Sigmoid colon (tissue), 7 donors: ENCODE measurements at regions of chr18 and their contacts with region 1.

Region 1: DNA sequence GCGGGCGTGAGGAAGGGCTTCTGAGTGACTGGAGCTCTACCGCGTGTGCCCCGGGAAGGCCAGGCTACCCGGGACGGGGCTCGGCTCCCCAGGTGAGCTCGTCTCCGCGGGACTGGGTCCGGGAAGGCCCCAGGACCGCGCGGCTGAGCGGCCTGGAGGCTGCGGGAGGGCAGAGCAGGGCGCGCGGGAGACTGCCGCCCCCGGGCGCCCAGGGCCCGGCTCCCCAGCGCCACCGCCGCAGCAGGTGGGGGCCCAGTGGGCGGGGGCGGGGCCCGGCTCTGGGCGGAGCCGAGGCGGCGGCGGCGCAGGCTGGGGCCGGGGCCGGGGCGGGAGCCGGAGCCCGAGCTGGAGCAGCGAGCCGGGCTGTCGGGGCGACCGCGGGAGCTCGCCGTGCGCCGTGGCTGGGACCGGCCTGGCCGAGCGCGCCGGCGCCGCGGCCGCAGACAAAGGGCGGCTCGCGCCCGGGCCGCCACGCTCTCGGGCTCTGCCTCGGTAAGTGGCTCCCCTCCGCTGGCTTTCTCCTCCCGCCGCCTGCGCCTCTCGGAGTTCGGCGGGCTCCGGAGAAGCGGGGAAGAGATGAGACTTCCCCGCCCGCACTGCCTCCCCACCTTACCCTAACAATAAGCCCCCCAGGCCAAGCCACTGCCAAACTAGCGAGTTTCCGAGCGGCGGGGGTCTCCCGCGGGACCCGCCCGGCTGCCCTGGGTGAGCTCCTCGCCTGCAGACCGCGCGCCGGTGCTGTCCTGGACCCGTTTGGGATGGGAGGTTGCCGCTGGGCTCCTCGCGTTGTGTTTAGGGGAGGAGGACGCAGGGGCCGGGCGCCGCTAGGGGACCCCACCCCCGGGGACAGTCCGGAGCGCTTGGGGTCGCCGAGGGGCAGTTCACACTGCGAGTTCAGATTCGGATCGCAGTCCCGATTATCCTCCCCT is at the start of gene MAPK4:
- DNase-seq: peak; percentile 71
- H3K4me3 ChIP-seq: peak within 1 kb of the TSS; percentile 62 to 79 (median 67)
- H3K27ac ChIP-seq: peak within 1 kb of the TSS; percentile 75 to 86 (median 82)
- H3K4me1 ChIP-seq: peaks cover 0 to 23% (median 18%) of the 10 kb centered on the region in 4 donors
- H3K27me3 ChIP-seq: peaks cover 0 to 4% (median 0%) of the 10 kb centered on the region in 3 donors
- CTCF ChIP-seq: no peak
- EP300 ChIP-seq: no peak
- POLR2A ChIP-seq: no peak
- total RNA-seq, gene MAPK4: 6.8 to 16.1 (median 12.9) TPM

Region 2: GRCh38 chr18:50665519-50665918 is 105.5 kb after region 1 on chr18:
- intact Hi-C with region 1: no loop called
- DNase-seq: no peak
- H3K4me3 ChIP-seq: no peak overlapping the region
- H3K27ac ChIP-seq: no peak overlapping the region
- H3K4me1 ChIP-seq: peaks cover 0 to 5% (median 0%) of the 10 kb centered on the region in 4 donors
- H3K27me3 ChIP-seq: no peaks in the 10 kb centered on the region
- CTCF ChIP-seq: no peak
- EP300 ChIP-seq: no peak
- POLR2A ChIP-seq: no peak

Region 3: DNA sequence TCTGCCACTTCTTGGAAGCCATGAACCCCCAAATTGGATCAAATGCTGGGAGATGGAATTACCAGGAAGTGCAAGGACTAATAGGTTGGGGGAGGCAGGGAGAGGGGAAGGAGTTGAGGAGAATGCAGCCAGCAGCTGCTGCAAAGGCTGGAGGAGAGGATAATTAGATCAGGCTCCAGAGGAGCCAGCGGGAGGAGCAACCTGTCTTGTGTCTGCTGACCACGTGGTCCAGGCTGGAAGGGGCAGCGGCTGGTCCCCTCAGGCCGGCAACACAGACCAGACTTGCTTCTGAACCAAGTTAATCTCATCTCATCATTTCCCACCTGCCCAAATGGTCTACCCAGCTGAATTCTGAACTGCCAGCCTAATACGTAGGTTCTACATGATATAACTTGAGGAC is 191.5 kb after region 1 on chr18:
- intact Hi-C with region 1: loop called (anchors 10 kb)
- DNase-seq: no peak
- H3K4me3 ChIP-seq: no peak overlapping the region
- H3K27ac ChIP-seq: no peak overlapping the region
- H3K4me1 ChIP-seq: no peaks in the 10 kb centered on the region
- H3K27me3 ChIP-seq: no peaks in the 10 kb centered on the region
- CTCF ChIP-seq: no peak
- EP300 ChIP-seq: no peak
- POLR2A ChIP-seq: no peak

Region 4: GRCh38 chr18:50780144-50780543 is 220.1 kb after region 1 on chr18:
- intact Hi-C with region 1: loop called (anchors 5 kb)
- DNase-seq: no peak
- H3K4me3 ChIP-seq: no peak overlapping the region
- H3K27ac ChIP-seq: no peak overlapping the region
- H3K4me1 ChIP-seq: peaks cover 0 to 6% (median 0%) of the 10 kb centered on the region in 4 donors
- H3K27me3 ChIP-seq: no peaks in the 10 kb centered on the region
- CTCF ChIP-seq: no peak
- EP300 ChIP-seq: no peak
- POLR2A ChIP-seq: no peak